Activated naive CD4-positive, alpha-beta T cell treated with anti-CD3 and anti-CD28 coated beads for 36 hours (primary cell): ENCODE measurements at regions of chr7 and their contacts with region 1.

Region 1: DNA sequence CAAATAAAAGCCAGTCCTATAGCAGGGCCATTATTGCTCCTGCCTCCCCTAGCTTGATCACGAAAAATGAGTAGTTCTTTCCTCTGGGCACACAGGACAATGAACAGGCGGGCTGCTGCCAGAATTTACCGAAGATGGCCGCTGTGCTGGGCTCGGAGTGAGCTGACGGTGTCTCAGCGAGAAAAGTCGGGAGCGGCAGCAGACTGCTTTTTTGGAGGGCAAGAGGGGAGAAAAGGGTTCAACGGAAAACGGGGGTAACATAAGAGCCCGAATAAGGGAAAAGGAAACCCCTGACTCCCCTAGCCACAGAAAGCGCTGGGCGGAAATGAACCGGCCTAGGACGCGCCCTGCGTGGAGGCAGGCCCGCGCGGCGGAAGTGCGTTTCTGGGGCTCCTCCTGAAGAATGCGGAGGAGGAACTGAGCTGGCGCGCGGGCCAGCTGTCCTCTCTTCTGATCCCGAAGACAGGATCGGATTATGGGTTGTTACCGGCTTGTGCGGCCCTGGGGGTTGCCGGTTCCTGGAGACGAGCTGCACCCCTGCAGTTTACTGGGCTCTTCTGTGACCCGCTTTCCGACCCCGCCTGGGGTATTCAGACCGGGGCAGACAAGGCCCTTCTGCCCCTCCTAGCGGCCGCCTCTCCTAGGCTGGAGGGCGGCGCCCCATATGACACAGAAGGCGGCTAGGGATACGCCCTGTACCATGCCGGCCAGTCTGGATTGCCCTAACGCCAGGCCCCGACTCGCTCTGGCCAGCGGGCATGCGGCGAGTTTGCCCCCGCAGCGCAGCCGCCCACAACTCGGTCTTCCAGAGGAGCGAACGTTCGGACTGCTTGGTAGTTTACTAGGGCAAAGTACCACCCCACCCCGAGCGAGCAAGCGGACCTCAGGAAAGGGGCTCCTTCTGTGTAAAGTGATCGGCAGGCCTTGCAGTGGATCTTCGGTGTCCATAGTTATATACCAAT is 30.1 kb upstream of the KMT2E start:
- DNase-seq: peak; percentile 89
- H3K4me3 Mint-ChIP-seq: peak overlapping the region; percentile 98
- H3K27ac Mint-ChIP-seq: peak overlapping the region; percentile 100
- H3K4me1 Mint-ChIP-seq: peaks cover 65% of the 10 kb centered on the region
- H3K27me3 Mint-ChIP-seq: no peaks in the 10 kb centered on the region

Region 2: GRCh38 chr7:105003275-105003674 is 19.4 kb after region 1 on chr7:
- CTCF ChIA-PET with region 1: interaction called, 140 read pairs
- intact Hi-C with region 1: loop called (anchors 2 kb)
- DNase-seq: peak; percentile 67
- H3K4me3 Mint-ChIP-seq: peak overlapping the region; percentile 49
- H3K27ac Mint-ChIP-seq: peak overlapping the region; percentile 73
- H3K4me1 Mint-ChIP-seq: peaks cover 84% of the 10 kb centered on the region
- H3K27me3 Mint-ChIP-seq: no peaks in the 10 kb centered on the region

Region 3: DNA sequence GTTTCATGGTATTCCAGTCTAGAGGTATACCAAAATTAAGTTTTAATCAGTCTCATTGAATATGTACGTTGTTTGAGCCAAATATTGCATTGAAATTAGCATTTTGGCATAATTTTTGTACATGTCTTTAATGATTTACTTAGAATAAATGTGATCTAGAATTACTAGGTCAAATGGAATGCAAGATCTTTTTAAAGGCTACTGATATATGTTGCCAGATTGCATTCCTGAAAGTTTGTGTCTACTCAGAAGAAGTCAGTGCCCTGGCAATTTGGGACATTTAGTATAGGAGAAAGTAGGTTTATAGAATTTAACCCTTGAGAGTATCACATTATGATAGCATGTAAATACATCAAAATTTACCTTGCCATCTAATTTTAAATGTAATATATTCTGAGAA is 62.6 kb after region 1 on chr7:
- CTCF ChIA-PET with region 1: interaction called, 7 read pairs
- intact Hi-C with region 1: loop called (anchors 1 kb)
- DNase-seq: no peak
- H3K4me3 Mint-ChIP-seq: no peak overlapping the region
- H3K27ac Mint-ChIP-seq: no peak overlapping the region
- H3K4me1 Mint-ChIP-seq: peaks cover 36% of the 10 kb centered on the region
- H3K27me3 Mint-ChIP-seq: no peaks in the 10 kb centered on the region

Region 4: GRCh38 chr7:105336009-105336408 is 352.1 kb after region 1 on chr7:
- CTCF ChIA-PET with region 1: interaction called, 3 read pairs
- intact Hi-C with region 1: loop called (anchors 1 kb)
- DNase-seq: no peak
- H3K4me3 Mint-ChIP-seq: no peak overlapping the region
- H3K27ac Mint-ChIP-seq: no peak overlapping the region
- H3K4me1 Mint-ChIP-seq: peaks cover 27% of the 10 kb centered on the region
- H3K27me3 Mint-ChIP-seq: no peaks in the 10 kb centered on the region

Region 5: DNA sequence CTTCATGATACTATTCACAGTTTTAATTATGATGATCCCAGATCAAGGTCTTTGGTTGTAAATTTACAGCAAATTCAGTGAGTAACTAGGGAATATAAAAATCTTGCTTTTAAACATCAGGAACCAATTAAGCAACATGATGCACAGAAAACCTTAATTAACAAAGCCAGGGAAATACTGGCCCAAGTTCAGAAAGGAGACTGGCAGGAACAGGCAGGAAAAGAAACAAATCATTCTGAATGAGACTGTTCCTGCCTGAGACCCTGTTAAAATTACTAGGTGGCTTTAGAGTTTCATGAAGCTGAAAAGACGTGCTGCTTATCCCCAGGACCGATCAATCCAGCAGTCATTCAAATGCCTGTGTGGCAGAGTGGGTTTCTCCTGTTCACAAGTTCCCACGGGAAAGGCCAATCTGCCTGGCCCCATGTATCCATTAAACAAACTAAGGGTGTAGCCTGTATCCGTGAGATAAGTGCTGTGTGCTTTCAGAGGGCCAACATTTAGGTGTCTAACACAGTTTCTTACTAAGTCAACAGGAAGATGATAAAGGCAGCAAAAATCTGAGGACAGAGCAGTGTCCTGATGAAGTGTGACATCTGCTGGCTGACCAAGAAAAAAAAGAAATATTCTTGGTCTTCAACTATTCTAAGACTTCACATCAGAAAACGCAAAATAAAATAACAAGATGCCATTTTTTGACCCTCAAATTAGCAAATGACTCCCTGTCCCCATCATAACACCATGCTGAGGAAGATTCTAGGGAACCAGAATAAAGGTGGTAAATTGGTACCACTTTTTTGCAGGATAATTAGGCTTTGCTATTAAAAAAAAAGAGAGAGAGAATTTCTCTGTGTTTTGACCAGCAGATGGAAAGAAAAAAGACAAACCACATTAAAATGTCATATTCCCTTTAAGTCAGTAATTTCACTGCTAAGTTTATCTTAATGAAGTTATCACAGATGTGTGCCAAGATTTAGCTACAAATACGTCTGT is 504.0 kb after region 1 on chr7:
- CTCF ChIA-PET with region 1: interaction called, 3 read pairs
- intact Hi-C with region 1: loop called (anchors 1 kb)
- DNase-seq: no peak
- H3K4me3 Mint-ChIP-seq: no peak overlapping the region
- H3K27ac Mint-ChIP-seq: no peak overlapping the region
- H3K4me1 Mint-ChIP-seq: no peaks in the 10 kb centered on the region
- H3K27me3 Mint-ChIP-seq: no peaks in the 10 kb centered on the region